MCF 10A (cell line): ENCODE measurements at regions of chr22 and their contacts with region 1.

Region 1: GRCh38 chr22:24525416-24526037 is 29.4 kb downstream of the GUCD1 start:
- DNase-seq: peak; percentile 83
- H3K4me3 Mint-ChIP-seq: no peak overlapping the region
- H3K27ac Mint-ChIP-seq: no peak overlapping the region
- H3K4me1 Mint-ChIP-seq: peaks cover 7% of the 10 kb centered on the region
- H3K27me3 Mint-ChIP-seq: no peaks in the 10 kb centered on the region
- CTCF ChIP-seq: peak; percentile 72

Region 2: GRCh38 chr22:24325105-24325757 is 200.3 kb before region 1 on chr22:
- CTCF ChIA-PET with region 1: interaction called, 33 read pairs
- POLR2A ChIA-PET with region 1: no interaction called
- intact Hi-C with region 1: loop called (anchors 1 kb)
- DNase-seq: peak; percentile 61
- H3K4me3 Mint-ChIP-seq: no peak overlapping the region
- H3K27ac Mint-ChIP-seq: no peak overlapping the region
- H3K4me1 Mint-ChIP-seq: peaks cover 11% of the 10 kb centered on the region
- H3K27me3 Mint-ChIP-seq: no peaks in the 10 kb centered on the region
- CTCF ChIP-seq: peak; percentile 49

Region 3: DNA sequence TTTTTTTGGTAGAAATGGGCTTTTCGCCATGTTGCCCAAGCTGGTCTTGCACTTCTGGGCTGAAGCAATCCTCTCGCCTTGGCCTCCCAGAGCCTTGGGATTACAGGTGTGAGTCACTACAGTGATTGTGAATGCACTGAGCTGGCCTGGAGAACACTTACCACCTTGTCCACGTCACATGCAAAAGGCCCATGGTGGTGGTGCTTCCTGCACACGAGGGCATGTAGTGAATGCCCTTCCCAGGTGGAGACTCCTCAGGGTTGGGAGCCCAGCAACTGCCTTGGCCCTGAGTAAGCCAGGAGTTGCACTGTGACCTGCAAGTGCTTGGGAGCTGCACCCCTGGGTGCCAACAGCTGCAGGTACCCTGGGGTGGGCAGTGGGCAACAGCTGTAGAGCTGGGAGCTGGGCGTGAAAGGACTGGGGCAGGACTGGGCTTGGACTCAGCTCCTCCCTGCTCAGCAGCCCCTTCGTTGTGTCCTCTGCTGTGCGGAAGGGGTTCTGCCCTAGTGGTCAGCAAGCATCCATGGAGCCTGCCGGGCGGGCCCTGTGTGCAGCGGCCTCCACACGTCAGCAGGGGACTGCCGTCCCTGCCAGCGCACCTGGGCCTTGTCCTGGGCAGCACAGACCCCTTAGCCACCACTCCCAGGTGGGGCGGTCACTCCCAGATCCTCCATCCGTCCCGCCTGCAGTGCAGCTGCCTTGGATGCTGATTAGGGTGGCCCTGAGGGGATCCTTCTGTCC is 107.5 kb before region 1 on chr22:
- CTCF ChIA-PET with region 1: interaction called, 42 read pairs
- POLR2A ChIA-PET with region 1: interaction called, 3 read pairs
- intact Hi-C with region 1: loop called (anchors 1 kb)
- DNase-seq: peak; percentile 80
- H3K4me3 Mint-ChIP-seq: no peak overlapping the region
- H3K27ac Mint-ChIP-seq: no peak overlapping the region
- H3K4me1 Mint-ChIP-seq: peaks cover 6% of the 10 kb centered on the region
- H3K27me3 Mint-ChIP-seq: no peaks in the 10 kb centered on the region
- CTCF ChIP-seq: no peak

Region 4: GRCh38 chr22:24423519-24424000 is 102.0 kb before region 1 on chr22:
- CTCF ChIA-PET with region 1: interaction called, 42 read pairs
- POLR2A ChIA-PET with region 1: interaction called, 3 read pairs
- intact Hi-C with region 1: loop called (anchors 1 kb)
- DNase-seq: peak; percentile 30
- H3K4me3 Mint-ChIP-seq: no peak overlapping the region
- H3K27ac Mint-ChIP-seq: no peak overlapping the region
- H3K4me1 Mint-ChIP-seq: peaks cover 6% of the 10 kb centered on the region
- H3K27me3 Mint-ChIP-seq: peaks cover 18% of the 10 kb centered on the region
- CTCF ChIP-seq: peak; percentile 91

Region 5: GRCh38 chr22:24433813-24434470 is 91.6 kb before region 1 on chr22:
- CTCF ChIA-PET with region 1: interaction called, 13 read pairs
- POLR2A ChIA-PET with region 1: interaction called, 3 read pairs
- intact Hi-C with region 1: no loop called
- DNase-seq: peak; percentile 30
- H3K4me3 Mint-ChIP-seq: no peak overlapping the region
- H3K27ac Mint-ChIP-seq: no peak overlapping the region
- H3K4me1 Mint-ChIP-seq: peaks cover 15% of the 10 kb centered on the region
- H3K27me3 Mint-ChIP-seq: no peaks in the 10 kb centered on the region
- CTCF ChIP-seq: no peak

Region 6: DNA sequence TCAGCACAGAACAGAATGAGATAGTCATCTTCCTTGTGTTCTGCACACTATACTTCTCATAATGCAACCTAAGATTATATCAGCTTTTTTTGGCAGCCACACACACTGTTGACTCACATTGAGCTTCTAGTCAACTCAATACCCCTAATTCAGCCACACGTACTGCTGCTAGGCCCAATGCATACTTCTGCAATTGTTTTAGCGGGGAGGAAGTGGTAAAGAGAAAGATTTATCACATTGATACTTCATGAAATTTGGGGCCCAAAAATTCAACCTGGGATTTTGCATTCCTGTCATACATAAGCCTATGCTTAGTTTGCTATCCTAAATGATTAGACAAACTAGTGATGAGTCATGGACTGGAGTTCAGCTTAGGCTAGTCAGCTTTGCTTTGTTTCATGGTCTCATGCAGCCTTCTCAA is 39.0 kb before region 1 on chr22:
- CTCF ChIA-PET with region 1: interaction called, 12 read pairs
- POLR2A ChIA-PET with region 1: no interaction called
- intact Hi-C with region 1: no loop called
- DNase-seq: peak; percentile 79
- H3K4me3 Mint-ChIP-seq: no peak overlapping the region
- H3K27ac Mint-ChIP-seq: no peak overlapping the region
- H3K4me1 Mint-ChIP-seq: peaks cover 30% of the 10 kb centered on the region
- H3K27me3 Mint-ChIP-seq: no peaks in the 10 kb centered on the region
- CTCF ChIP-seq: no peak

Region 7: DNA sequence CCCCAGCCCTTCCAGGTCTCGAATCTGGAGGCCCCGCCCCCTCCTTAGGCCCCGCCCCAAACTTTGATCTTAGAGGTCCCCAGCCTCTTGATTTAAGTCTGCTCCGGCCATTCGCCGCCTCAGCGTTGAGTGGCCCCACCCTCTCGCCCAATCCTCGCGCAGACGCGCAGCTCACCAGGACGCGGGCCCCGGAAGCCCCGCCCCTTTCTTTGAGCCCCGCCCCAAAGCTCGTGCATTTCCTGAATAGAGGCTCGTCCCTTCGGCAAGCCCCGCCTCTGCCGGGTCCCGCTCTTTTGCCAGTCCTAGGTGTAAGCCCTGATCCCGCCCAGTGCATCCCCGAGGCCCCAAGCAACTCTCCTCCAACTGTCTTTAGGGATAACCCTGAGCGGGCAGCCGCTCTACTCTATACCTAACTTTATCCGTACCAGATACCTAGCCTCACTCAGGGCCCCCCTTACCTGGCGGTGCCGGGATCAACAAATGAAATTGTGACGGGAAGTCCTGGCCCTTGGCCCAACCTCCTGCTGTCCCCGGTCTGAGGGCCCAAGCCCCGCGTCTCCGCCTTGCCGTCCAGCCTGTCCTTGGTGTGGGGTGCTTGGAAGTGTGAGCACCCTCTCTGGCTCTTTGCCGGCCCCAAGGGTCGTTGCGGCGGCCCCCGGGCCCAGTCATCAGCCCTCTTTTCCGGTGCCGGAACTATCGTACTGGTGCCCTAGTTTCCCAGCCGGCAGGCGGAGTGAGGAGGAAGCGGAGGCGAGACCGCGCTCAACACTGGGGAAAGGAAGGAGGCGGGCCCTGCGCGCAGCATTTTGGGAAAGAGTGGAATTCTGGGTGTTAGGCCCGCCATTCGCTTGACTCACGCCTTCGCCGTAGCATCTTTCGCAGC is 29.9 kb after region 1 on chr22 and contains the start of gene SNRPD3:
- CTCF ChIA-PET with region 1: interaction called, 3 read pairs
- POLR2A ChIA-PET with region 1: interaction called, 12 read pairs
- intact Hi-C with region 1: no loop called
- DNase-seq: peak; percentile 98
- H3K4me3 Mint-ChIP-seq: peak within 1 kb of the TSS; percentile 96
- H3K27ac Mint-ChIP-seq: peak within 1 kb of the TSS; percentile 97
- H3K4me1 Mint-ChIP-seq: peaks cover 42% of the 10 kb centered on the region
- H3K27me3 Mint-ChIP-seq: no peaks in the 10 kb centered on the region
- CTCF ChIP-seq: no peak
- total RNA-seq, gene SNRPD3: 90.9 and 94.6 TPM in 2 replicates